ENCODE measurements at regions of chr6 and their contacts with region 1.

Region 1: GRCh38 chr6:45377554-45378333 is at the start of gene SUPT3H:
- DNase-seq: peak; percentile 95
- ATAC-seq: peak; percentile 77
- H3K4me3 ChIP-seq: peak within 1 kb of the TSS; percentile 76 to 98 (median 93)
- H3K4me3 Mint-ChIP-seq: peak within 1 kb of the TSS; percentile 98
- H3K27ac ChIP-seq: peak within 1 kb of the TSS; percentile 97
- H3K27ac Mint-ChIP-seq: peak within 1 kb of the TSS; percentile 97
- H3K4me1 ChIP-seq: peaks cover 9 to 12% of the 10 kb centered on the region in 2 donors
- H3K4me1 Mint-ChIP-seq: peaks cover 28% of the 10 kb centered on the region
- H3K27me3 ChIP-seq: no peaks in the 10 kb centered on the region
- H3K27me3 Mint-ChIP-seq: no peaks in the 10 kb centered on the region
- CTCF ChIP-seq: no peak
- total RNA-seq, gene SUPT3H: 12.4 and 14.1 TPM in 2 replicates

Region 2: DNA sequence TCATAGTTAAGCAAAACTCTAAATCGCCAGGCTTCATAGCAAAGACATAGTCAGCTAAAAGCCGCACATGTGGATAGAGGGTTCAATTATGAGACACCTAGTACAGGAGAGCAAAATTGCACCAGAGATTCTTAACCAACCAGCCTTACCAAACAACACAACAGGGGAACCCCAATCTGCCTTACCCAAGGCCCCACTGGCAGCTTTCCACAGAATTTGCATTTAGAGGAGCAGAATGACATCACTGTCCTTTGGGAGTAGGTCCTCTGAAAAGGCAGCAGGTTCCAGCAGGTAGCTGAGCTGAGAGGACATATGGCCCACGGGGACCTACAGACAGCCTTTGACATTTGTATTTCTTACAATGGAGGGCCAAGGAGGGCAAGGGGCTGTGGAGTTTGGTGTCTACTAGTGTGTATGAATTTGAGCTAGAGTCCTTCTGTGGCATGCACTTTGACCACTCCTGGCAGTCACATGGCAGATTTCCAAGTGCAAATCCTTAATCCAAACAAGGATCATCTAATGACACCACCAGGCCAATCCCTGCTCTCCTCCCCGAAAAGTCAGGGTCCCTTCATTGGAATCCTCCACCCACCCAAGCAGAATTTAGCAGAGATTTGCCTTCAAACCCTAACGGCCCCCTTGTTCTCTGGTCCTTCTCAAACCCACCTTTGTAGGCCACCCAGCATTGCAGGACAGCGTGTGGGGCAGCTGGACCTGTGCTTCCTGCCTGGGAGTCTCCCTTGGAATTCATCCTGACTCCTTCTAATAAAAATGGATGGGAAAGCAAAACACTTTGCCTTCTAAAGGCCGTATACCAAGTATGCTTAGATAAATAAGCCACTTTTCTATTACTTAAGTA is 171.1 kb after region 1 on chr6:
- CTCF ChIA-PET with region 1: no interaction called
- POLR2A ChIA-PET with region 1: no interaction called
- intact Hi-C with region 1: loop called (anchors 5 kb)
- DNase-seq: peak; percentile 69
- ATAC-seq: peak; percentile 95
- H3K4me3 ChIP-seq: no peak overlapping the region
- H3K4me3 Mint-ChIP-seq: peak overlapping the region; percentile 32
- H3K27ac ChIP-seq: no peak overlapping the region
- H3K27ac Mint-ChIP-seq: no peak overlapping the region
- H3K4me1 ChIP-seq: peaks cover 10% of the 10 kb centered on the region in 2 donors
- H3K4me1 Mint-ChIP-seq: peaks cover 14% of the 10 kb centered on the region
- H3K27me3 ChIP-seq: no peaks in the 10 kb centered on the region
- H3K27me3 Mint-ChIP-seq: no peaks in the 10 kb centered on the region
- CTCF ChIP-seq: no peak

Measured in B cell (primary cell).